ENCODE measurements at regions of chr7 and their contacts with region 1.

Region 1: GRCh38 chr7:4681886-4682620 is at the start of gene FOXK1:
- DNase-seq: peak; percentile 74 to 78 (median 76)
- ATAC-seq: peak; percentile 88
- H3K4me3 ChIP-seq: peak within 1 kb of the TSS; percentile 68 to 74
- H3K27ac ChIP-seq: peak within 1 kb of the TSS; percentile 63 to 87 (median 77)
- H3K4me1 ChIP-seq: peaks cover 34% of the 10 kb centered on the region
- H3K27me3 ChIP-seq: no peaks in the 10 kb centered on the region
- CTCF ChIP-seq: peak in 1 of 7 experiments; percentile 29
- POLR2A ChIP-seq: peak; percentile 22 to 60 (median 53)
- total RNA-seq, gene FOXK1: 16.2 to 17.6 TPM

Region 2: GRCh38 chr7:4641667-4642467 is 40.2 kb before region 1 on chr7:
- intact Hi-C with region 1: loop called (anchors 5 kb)
- DNase-seq: peak; percentile 96 to 98 (median 96)
- ATAC-seq: peak; percentile 95
- H3K4me3 ChIP-seq: peak overlapping the region; percentile 12 to 22
- H3K27ac ChIP-seq: peak overlapping the region; percentile 63 to 89 (median 78)
- H3K4me1 ChIP-seq: peaks cover 13% of the 10 kb centered on the region
- H3K27me3 ChIP-seq: no peaks in the 10 kb centered on the region
- CTCF ChIP-seq: peak in 5 of 7 experiments; percentile 7 to 65 (median 52)
- POLR2A ChIP-seq: peak; percentile 42 to 81 (median 68)

Region 3: GRCh38 chr7:4744391-4745264 is 62.6 kb after region 1 on chr7:
- intact Hi-C with region 1: loop called (anchors 5 kb)
- DNase-seq: peak; percentile 97 to 99 (median 97)
- ATAC-seq: peak; percentile 96
- H3K4me3 ChIP-seq: no peak overlapping the region
- H3K27ac ChIP-seq: peak overlapping the region; percentile 85 to 88 (median 86)
- H3K4me1 ChIP-seq: peaks cover 35% of the 10 kb centered on the region
- H3K27me3 ChIP-seq: no peaks in the 10 kb centered on the region
- CTCF ChIP-seq: no peak
- POLR2A ChIP-seq: peak in 2 of 3 donors; percentile 40 to 49